ENCODE measurements at regions of chr2 and their contacts with region 1.

Region 1: DNA sequence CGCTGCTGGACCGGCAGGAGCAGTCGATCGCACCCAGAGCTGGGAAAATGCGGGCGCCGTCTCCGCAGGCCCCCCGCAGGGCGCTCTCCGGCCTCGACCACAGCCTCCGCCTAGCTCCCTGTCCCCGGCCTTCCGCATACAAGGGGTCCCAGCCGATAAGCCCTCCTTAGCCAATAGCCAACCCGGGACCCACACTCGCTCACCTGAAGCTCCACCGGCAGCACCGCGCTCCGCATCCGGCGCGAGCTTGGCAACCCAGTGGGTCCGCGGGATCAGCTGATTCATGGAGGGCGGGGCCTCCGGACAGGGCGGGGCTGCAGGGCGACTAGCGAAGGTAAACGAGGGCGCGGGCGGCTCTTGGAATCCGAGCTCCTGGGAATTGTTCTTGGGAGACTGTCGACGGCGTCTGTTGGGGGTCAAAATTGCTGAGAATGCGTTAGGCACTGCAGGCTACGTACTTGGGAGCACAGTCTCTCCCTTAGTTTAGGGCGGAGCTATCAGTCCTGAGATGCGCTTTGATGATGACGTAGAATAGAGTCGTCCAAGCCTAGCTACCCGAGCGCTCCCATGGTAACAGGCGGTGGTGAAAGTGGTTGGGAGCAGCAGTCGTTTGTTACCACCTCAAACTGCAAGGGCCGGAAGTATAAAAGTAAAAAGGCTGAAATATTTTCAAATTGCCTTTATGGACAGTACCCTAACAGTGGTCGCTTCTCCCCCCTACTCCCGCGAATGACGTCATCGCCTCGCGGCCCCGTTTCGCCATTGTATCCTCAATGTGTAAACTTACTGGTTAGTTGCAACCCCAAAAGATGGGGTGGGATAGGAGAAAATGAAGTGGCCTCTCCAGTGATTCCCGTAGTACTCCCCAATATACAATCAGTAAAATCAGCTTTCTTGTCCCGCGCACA is at the start of gene ALS2:
- DNase-seq: peak; percentile 88 to 97 (median 94)
- ATAC-seq: peak; percentile 91
- H3K4me3 ChIP-seq: peak within 1 kb of the TSS; percentile 80 to 89
- H3K4me3 Mint-ChIP-seq: peak within 1 kb of the TSS; percentile 98
- H3K27ac ChIP-seq: peak within 1 kb of the TSS; percentile 94
- H3K27ac Mint-ChIP-seq: peak within 1 kb of the TSS; percentile 98
- H3K4me1 ChIP-seq: peaks cover 16% of the 10 kb centered on the region
- H3K4me1 Mint-ChIP-seq: peaks cover 27% of the 10 kb centered on the region
- H3K27me3 ChIP-seq: no peaks in the 10 kb centered on the region
- H3K27me3 Mint-ChIP-seq: peaks cover 3% of the 10 kb centered on the region
- CTCF ChIP-seq: no peak
- total RNA-seq, gene ALS2: 6.6 to 9.0 TPM

Region 2: GRCh38 chr2:200509612-200510433 is 1271.1 kb before region 1 on chr2 and contains the start of gene KCTD18:
- CTCF ChIA-PET with region 1: no interaction called
- POLR2A ChIA-PET with region 1: no interaction called
- intact Hi-C with region 1: loop called in 1 of 2 experiments (anchors 5 kb)
- DNase-seq: peak; percentile 83 to 96 (median 93)
- ATAC-seq: peak; percentile 99
- H3K4me3 ChIP-seq: peak within 1 kb of the TSS; percentile 78 to 79
- H3K4me3 Mint-ChIP-seq: peak within 1 kb of the TSS; percentile 91
- H3K27ac ChIP-seq: peak within 1 kb of the TSS; percentile 61 to 71
- H3K27ac Mint-ChIP-seq: peak within 1 kb of the TSS; percentile 93
- H3K4me1 ChIP-seq: peaks cover 25% of the 10 kb centered on the region
- H3K4me1 Mint-ChIP-seq: peaks cover 42% of the 10 kb centered on the region
- H3K27me3 ChIP-seq: peaks cover 0 to 7% of the 10 kb centered on the region in 2 experiments
- H3K27me3 Mint-ChIP-seq: no peaks in the 10 kb centered on the region
- CTCF ChIP-seq: peak; percentile 75
- total RNA-seq, gene KCTD18: 17.9 to 20.4 TPM

Region 3: DNA sequence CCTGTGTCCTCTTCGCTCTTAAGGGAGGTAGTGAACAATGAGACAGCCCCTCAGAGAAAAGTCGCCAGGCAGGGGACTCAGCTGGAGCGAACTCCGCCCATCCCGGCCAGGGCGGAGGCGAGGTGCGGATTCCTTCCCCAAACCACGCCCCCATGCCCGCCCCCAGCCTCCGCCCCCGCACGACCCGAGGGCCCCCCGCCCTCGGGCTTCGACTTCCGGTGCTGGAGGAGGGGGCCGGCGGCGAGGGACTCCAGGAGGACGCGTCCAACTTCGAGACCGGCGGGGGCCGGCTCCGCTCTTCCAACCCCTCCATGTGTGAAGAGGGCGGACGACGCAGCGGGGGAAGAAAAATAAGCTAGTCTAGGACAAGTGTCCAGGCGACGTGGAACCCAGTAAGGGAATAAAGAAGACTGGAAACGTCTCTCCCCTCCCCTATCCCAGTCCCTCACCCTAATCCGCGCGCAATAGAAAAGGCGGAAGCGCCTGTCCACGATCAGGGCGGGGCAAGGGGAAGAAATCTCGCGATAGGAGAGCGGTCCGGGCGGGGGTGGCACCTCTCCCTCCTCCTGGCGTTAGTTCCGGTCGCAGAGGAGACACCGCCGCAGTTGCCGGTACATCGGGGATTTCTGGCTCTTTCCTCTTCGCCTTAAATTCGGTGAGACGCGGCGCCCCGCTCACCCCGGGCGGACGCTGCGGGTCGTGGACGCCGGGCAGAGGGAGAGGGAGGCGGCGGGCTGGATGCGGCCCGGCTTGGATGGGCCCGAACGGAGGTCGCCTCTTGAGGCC is 969.4 kb before region 1 on chr2 and contains the start of gene BZW1:
- CTCF ChIA-PET with region 1: no interaction called
- POLR2A ChIA-PET with region 1: interaction called, 4 read pairs
- intact Hi-C with region 1: loop called (anchors 5 to 10 kb)
- DNase-seq: peak; percentile 94 to 98 (median 97)
- ATAC-seq: peak; percentile 82
- H3K4me3 ChIP-seq: peak within 1 kb of the TSS; percentile 69 to 90
- H3K4me3 Mint-ChIP-seq: peak within 1 kb of the TSS; percentile 99
- H3K27ac ChIP-seq: peak within 1 kb of the TSS; percentile 98
- H3K27ac Mint-ChIP-seq: peak within 1 kb of the TSS; percentile 98
- H3K4me1 ChIP-seq: peaks cover 33% of the 10 kb centered on the region
- H3K4me1 Mint-ChIP-seq: peaks cover 48% of the 10 kb centered on the region
- H3K27me3 ChIP-seq: no peaks in the 10 kb centered on the region
- H3K27me3 Mint-ChIP-seq: no peaks in the 10 kb centered on the region
- CTCF ChIP-seq: no peak
- total RNA-seq, gene BZW1: 330 to 338 TPM

Region 4: GRCh38 chr2:201642579-201643215 is 138.2 kb before region 1 on chr2:
- CTCF ChIA-PET with region 1: no interaction called
- POLR2A ChIA-PET with region 1: interaction called, 14 read pairs
- intact Hi-C with region 1: loop called (anchors 1 to 2 kb)
- DNase-seq: peak; percentile 65 to 91 (median 83)
- ATAC-seq: peak; percentile 86
- H3K4me3 ChIP-seq: peak overlapping the region; percentile 98 to 99
- H3K4me3 Mint-ChIP-seq: peak overlapping the region; percentile 90
- H3K27ac ChIP-seq: peak overlapping the region; percentile 89 to 99
- H3K27ac Mint-ChIP-seq: peak overlapping the region; percentile 96
- H3K4me1 ChIP-seq: no peaks in the 10 kb centered on the region
- H3K4me1 Mint-ChIP-seq: peaks cover 14% of the 10 kb centered on the region
- H3K27me3 ChIP-seq: no peaks in the 10 kb centered on the region
- H3K27me3 Mint-ChIP-seq: no peaks in the 10 kb centered on the region
- CTCF ChIP-seq: no peak

Region 5: GRCh38 chr2:201733544-201733943 is 47.4 kb before region 1 on chr2:
- CTCF ChIA-PET with region 1: no interaction called
- POLR2A ChIA-PET with region 1: no interaction called
- intact Hi-C with region 1: no loop called
- DNase-seq: no peak
- ATAC-seq: no peak
- H3K4me3 ChIP-seq: no peak overlapping the region
- H3K4me3 Mint-ChIP-seq: no peak overlapping the region
- H3K27ac ChIP-seq: no peak overlapping the region
- H3K27ac Mint-ChIP-seq: no peak overlapping the region
- H3K4me1 ChIP-seq: no peaks in the 10 kb centered on the region
- H3K4me1 Mint-ChIP-seq: no peaks in the 10 kb centered on the region
- H3K27me3 ChIP-seq: no peaks in the 10 kb centered on the region
- H3K27me3 Mint-ChIP-seq: no peaks in the 10 kb centered on the region
- CTCF ChIP-seq: no peak

Region 6: DNA sequence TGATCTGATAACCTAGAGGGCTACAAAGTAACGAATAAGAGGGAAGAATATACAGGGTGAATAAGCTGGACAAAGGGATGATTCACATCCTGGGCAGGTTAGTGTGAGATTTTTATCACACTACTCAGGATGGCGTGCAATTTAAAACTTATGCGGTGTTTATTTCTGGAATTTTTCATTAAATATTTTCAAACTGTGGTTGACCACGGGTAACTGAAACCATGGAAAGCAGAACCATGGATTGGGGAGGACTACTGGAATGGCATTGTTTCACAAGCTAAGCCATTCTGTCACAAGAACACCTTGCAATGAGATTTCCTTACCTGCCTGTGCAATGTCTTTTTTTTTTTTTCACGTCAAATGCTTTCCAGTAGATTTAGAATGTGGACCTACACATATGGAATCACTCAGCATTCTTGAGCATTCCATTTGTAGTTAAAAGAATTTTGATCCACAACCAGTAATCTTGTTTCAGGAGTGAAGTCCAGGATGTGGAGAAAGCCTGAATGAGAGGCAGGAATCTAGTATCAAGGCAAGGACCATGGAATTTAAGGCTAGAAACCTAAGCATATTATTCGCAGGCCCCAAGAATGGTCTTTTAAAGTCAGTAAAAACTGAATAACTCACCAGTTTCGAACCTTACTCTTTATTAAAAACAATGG is 17.5 kb after region 1 on chr2:
- CTCF ChIA-PET with region 1: no interaction called
- POLR2A ChIA-PET with region 1: no interaction called
- intact Hi-C with region 1: no loop called
- DNase-seq: no peak
- ATAC-seq: no peak
- H3K4me3 ChIP-seq: no peak overlapping the region
- H3K4me3 Mint-ChIP-seq: no peak overlapping the region
- H3K27ac ChIP-seq: no peak overlapping the region
- H3K27ac Mint-ChIP-seq: no peak overlapping the region
- H3K4me1 ChIP-seq: no peaks in the 10 kb centered on the region
- H3K4me1 Mint-ChIP-seq: no peaks in the 10 kb centered on the region
- H3K27me3 ChIP-seq: peaks cover 0 to 3% of the 10 kb centered on the region in 2 experiments
- H3K27me3 Mint-ChIP-seq: peaks cover 15% of the 10 kb centered on the region
- CTCF ChIP-seq: no peak

Region 7: GRCh38 chr2:202238234-202239197 is 457.6 kb after region 1 on chr2 and contains the start of gene SUMO1:
- CTCF ChIA-PET with region 1: no interaction called
- POLR2A ChIA-PET with region 1: no interaction called
- intact Hi-C with region 1: loop called in 1 of 2 experiments (anchors 1 kb)
- DNase-seq: peak; percentile 79 to 95 (median 92)
- ATAC-seq: peak; percentile 93
- H3K4me3 ChIP-seq: peak within 1 kb of the TSS; percentile 82 to 83
- H3K4me3 Mint-ChIP-seq: peak within 1 kb of the TSS; percentile 99
- H3K27ac ChIP-seq: peak within 1 kb of the TSS; percentile 82
- H3K27ac Mint-ChIP-seq: peak within 1 kb of the TSS; percentile 99
- H3K4me1 ChIP-seq: peaks cover 15% of the 10 kb centered on the region
- H3K4me1 Mint-ChIP-seq: peaks cover 43% of the 10 kb centered on the region
- H3K27me3 ChIP-seq: no peaks in the 10 kb centered on the region
- H3K27me3 Mint-ChIP-seq: no peaks in the 10 kb centered on the region
- CTCF ChIP-seq: no peak
- total RNA-seq, gene SUMO1: 86.1 to 87.4 TPM

Region 8: GRCh38 chr2:202375609-202376408 is 594.9 kb after region 1 on chr2 and contains the start of gene BMPR2:
- CTCF ChIA-PET with region 1: no interaction called
- POLR2A ChIA-PET with region 1: no interaction called
- intact Hi-C with region 1: loop called (anchors 5 to 10 kb)
- DNase-seq: peak; percentile 63 to 90 (median 81)
- ATAC-seq: peak; percentile 77
- H3K4me3 ChIP-seq: peak within 1 kb of the TSS; percentile 61 to 100
- H3K4me3 Mint-ChIP-seq: peak within 1 kb of the TSS; percentile 99
- H3K27ac ChIP-seq: peak within 1 kb of the TSS; percentile 64 to 80
- H3K27ac Mint-ChIP-seq: peak within 1 kb of the TSS; percentile 93
- H3K4me1 ChIP-seq: peaks cover 23% of the 10 kb centered on the region
- H3K4me1 Mint-ChIP-seq: peaks cover 30% of the 10 kb centered on the region
- H3K27me3 ChIP-seq: no peaks in the 10 kb centered on the region
- H3K27me3 Mint-ChIP-seq: no peaks in the 10 kb centered on the region
- CTCF ChIP-seq: no peak
- total RNA-seq, gene BMPR2: 9.4 to 9.6 TPM